PC-9 (cell line): ENCODE measurements at regions of chr2 and their contacts with region 1.

Region 1: GRCh38 chr2:234974501-234975385 is 22.9 kb downstream of the SH3BP4 start:
- DNase-seq: no peak
- H3K4me3 ChIP-seq: no peak overlapping the region
- H3K27ac ChIP-seq: no peak overlapping the region
- H3K4me1 ChIP-seq: peaks cover 60% of the 10 kb centered on the region
- H3K27me3 ChIP-seq: no peaks in the 10 kb centered on the region
- CTCF ChIP-seq: no peak

Region 2: GRCh38 chr2:234911271-234911670 is 63.5 kb before region 1 on chr2:
- CTCF ChIA-PET with region 1: no interaction called
- POLR2A ChIA-PET with region 1: interaction called, 12 read pairs
- intact Hi-C with region 1: no loop called
- DNase-seq: peak; percentile 75 to 89
- H3K4me3 ChIP-seq: no peak overlapping the region
- H3K27ac ChIP-seq: no peak overlapping the region
- H3K4me1 ChIP-seq: peaks cover 17% of the 10 kb centered on the region
- H3K27me3 ChIP-seq: no peaks in the 10 kb centered on the region
- CTCF ChIP-seq: no peak

Region 3: GRCh38 chr2:234957843-234958135 is 17.0 kb before region 1 on chr2:
- CTCF ChIA-PET with region 1: no interaction called
- POLR2A ChIA-PET with region 1: interaction called, 3 read pairs
- intact Hi-C with region 1: loop called (anchors 1 kb)
- DNase-seq: no peak
- H3K4me3 ChIP-seq: no peak overlapping the region
- H3K27ac ChIP-seq: no peak overlapping the region
- H3K4me1 ChIP-seq: peaks cover 92% of the 10 kb centered on the region
- H3K27me3 ChIP-seq: no peaks in the 10 kb centered on the region
- CTCF ChIP-seq: no peak